ENCODE measurements at regions of chr3 and their contacts with region 1.

Region 1: DNA sequence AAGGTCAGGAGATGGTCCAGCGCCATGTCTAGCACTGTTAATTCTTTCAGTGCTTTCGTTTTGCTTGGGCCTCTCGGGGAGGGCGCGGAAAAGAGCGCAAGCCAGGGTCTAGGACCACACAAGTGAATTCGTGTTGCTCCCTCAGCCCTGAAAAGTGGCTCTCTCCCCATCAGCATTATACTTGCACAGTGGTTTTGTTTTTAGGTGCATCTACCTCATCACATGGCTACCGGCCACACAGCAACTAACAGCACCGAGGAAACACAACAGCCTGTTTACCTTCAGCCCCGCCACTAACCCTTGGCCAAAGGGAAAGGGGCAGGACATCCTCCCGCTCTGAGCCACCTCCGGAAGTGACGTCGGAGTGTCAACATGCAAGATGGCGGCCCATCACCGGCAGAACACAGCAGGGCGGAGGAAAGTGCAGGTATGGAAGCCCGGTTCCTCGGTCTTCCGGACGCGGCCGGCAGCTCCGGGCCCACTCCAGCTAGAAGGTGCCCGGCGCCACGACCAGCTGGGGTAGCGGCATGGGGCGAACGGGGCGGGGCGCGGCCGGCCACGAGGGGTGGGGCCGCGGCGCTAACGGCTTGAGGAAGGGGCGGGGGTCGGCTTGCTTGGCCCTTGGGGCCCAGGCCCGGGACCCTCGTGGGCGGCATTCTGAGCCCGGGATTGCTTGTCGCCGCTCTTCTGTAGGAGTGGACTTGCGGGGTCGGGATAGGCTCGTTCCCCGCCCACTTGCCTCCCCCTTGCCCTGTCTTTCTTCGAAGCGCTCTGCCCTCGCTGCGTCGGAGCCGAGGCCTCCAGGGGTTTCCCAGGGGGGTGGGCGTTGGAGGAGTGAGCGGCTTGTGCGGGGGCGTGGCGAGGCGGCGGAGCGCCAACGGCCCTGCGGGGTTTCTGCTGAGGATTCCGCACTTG is at the starts of genes SCN11A and WDR48:
- DNase-seq: peak; percentile 82 to 97 (median 94)
- ATAC-seq: peak; percentile 88
- H3K4me3 ChIP-seq: peak within 1 kb of the TSS; percentile 59 to 70
- H3K4me3 Mint-ChIP-seq: peak within 1 kb of the TSS; percentile 98
- H3K27ac ChIP-seq: peak within 1 kb of the TSS; percentile 83 to 91
- H3K27ac Mint-ChIP-seq: peak within 1 kb of the TSS; percentile 98
- H3K4me1 ChIP-seq: peaks cover 16% of the 10 kb centered on the region
- H3K4me1 Mint-ChIP-seq: peaks cover 67% of the 10 kb centered on the region
- H3K27me3 ChIP-seq: no peaks in the 10 kb centered on the region
- H3K27me3 Mint-ChIP-seq: no peaks in the 10 kb centered on the region
- CTCF ChIP-seq: no peak
- total RNA-seq, gene SCN11A: 0.08 to 0.11 TPM
- total RNA-seq, gene WDR48: 102 to 103 TPM

Region 2: GRCh38 chr3:38136777-38137614 is 914.9 kb before region 1 on chr3 and contains the start of gene ACAA1:
- CTCF ChIA-PET with region 1: no interaction called
- POLR2A ChIA-PET with region 1: no interaction called
- intact Hi-C with region 1: loop called (anchors 10 kb)
- DNase-seq: peak; percentile 93 to 99 (median 97)
- ATAC-seq: peak; percentile 86
- H3K4me3 ChIP-seq: peak within 1 kb of the TSS; percentile 94 to 99
- H3K4me3 Mint-ChIP-seq: peak within 1 kb of the TSS; percentile 93
- H3K27ac ChIP-seq: peak within 1 kb of the TSS; percentile 74 to 88
- H3K27ac Mint-ChIP-seq: peak within 1 kb of the TSS; percentile 98
- H3K4me1 ChIP-seq: peaks cover 45% of the 10 kb centered on the region
- H3K4me1 Mint-ChIP-seq: peaks cover 70% of the 10 kb centered on the region
- H3K27me3 ChIP-seq: no peaks in the 10 kb centered on the region
- H3K27me3 Mint-ChIP-seq: no peaks in the 10 kb centered on the region
- CTCF ChIP-seq: no peak
- total RNA-seq, gene ACAA1: 49.4 to 49.9 TPM

Region 3: DNA sequence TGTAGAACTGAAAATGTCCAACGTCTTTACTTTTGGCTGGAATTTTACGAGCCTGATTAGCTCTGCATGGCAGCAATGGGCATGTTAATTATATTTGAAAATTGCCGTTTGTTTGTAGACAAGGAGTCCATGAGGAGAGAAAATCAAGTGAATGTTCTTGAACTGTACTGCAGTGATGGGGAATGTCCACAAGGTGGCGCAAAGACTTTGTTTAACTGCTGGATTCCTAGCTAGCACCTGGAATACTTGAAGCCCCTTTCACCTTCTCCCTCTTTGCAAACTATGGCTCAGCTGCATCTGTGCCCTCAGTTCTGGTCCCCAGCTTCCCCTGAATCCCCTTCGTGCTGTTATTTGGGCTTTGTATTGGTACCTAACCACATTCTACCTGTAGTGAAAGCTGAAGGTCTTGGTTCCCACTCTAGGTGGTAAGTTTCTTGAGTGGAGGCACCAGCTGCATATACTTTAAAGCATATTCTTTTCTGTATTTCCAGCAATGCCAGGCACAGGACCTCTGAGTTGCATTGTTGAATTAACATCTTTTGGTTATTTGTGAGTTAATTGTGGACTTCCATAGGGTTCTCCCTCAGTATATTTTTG is 530.4 kb before region 1 on chr3:
- CTCF ChIA-PET with region 1: no interaction called
- POLR2A ChIA-PET with region 1: no interaction called
- intact Hi-C with region 1: loop called in 1 of 2 experiments (anchors 5 kb)
- DNase-seq: peak; percentile 24 to 80 (median 65)
- ATAC-seq: peak; percentile 67
- H3K4me3 ChIP-seq: no peak overlapping the region
- H3K4me3 Mint-ChIP-seq: no peak overlapping the region
- H3K27ac ChIP-seq: no peak overlapping the region
- H3K27ac Mint-ChIP-seq: no peak overlapping the region
- H3K4me1 ChIP-seq: peaks cover 30% of the 10 kb centered on the region
- H3K4me1 Mint-ChIP-seq: peaks cover 34% of the 10 kb centered on the region
- H3K27me3 ChIP-seq: no peaks in the 10 kb centered on the region
- H3K27me3 Mint-ChIP-seq: no peaks in the 10 kb centered on the region
- CTCF ChIP-seq: peak; percentile 83

Region 4: DNA sequence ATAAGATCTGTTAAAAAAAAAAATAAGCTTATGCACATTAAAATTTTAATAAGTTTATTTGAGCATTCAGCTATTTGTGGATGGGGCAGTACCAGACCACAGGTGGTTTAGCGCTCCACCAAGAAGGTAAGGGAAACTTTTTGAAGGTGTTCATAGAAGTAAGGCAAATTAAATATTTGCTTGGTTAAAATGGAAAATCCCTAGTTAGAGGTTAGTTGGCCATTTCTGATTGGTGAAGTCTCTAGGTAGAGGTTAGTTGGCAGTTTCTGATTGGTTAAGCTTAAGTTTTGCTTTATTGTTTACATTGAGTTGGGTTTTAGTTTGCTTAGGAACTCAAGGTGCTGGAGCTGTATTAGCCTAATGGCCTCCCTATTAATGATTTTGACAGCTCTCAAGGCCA is 30.9 kb before region 1 on chr3:
- CTCF ChIA-PET with region 1: no interaction called
- POLR2A ChIA-PET with region 1: no interaction called
- intact Hi-C with region 1: no loop called
- DNase-seq: peak in 1 of 9 experiments; percentile 12
- ATAC-seq: no peak
- H3K4me3 ChIP-seq: no peak overlapping the region
- H3K4me3 Mint-ChIP-seq: no peak overlapping the region
- H3K27ac ChIP-seq: no peak overlapping the region
- H3K27ac Mint-ChIP-seq: no peak overlapping the region
- H3K4me1 ChIP-seq: no peaks in the 10 kb centered on the region
- H3K4me1 Mint-ChIP-seq: no peaks in the 10 kb centered on the region
- H3K27me3 ChIP-seq: no peaks in the 10 kb centered on the region
- H3K27me3 Mint-ChIP-seq: peaks cover 17% of the 10 kb centered on the region
- CTCF ChIP-seq: no peak

Region 5: GRCh38 chr3:39180546-39181346 is 128.8 kb after region 1 on chr3:
- CTCF ChIA-PET with region 1: no interaction called
- POLR2A ChIA-PET with region 1: no interaction called
- intact Hi-C with region 1: loop called (anchors 2 kb)
- DNase-seq: peak; percentile 79 to 96 (median 88)
- ATAC-seq: peak; percentile 89
- H3K4me3 ChIP-seq: peak overlapping the region; percentile 39 to 44
- H3K4me3 Mint-ChIP-seq: peak overlapping the region; percentile 76
- H3K27ac ChIP-seq: peak overlapping the region; percentile 39 to 62
- H3K27ac Mint-ChIP-seq: peak overlapping the region; percentile 85
- H3K4me1 ChIP-seq: peaks cover 27% of the 10 kb centered on the region
- H3K4me1 Mint-ChIP-seq: peaks cover 37% of the 10 kb centered on the region
- H3K27me3 ChIP-seq: no peaks in the 10 kb centered on the region
- H3K27me3 Mint-ChIP-seq: no peaks in the 10 kb centered on the region
- CTCF ChIP-seq: no peak

Region 6: DNA sequence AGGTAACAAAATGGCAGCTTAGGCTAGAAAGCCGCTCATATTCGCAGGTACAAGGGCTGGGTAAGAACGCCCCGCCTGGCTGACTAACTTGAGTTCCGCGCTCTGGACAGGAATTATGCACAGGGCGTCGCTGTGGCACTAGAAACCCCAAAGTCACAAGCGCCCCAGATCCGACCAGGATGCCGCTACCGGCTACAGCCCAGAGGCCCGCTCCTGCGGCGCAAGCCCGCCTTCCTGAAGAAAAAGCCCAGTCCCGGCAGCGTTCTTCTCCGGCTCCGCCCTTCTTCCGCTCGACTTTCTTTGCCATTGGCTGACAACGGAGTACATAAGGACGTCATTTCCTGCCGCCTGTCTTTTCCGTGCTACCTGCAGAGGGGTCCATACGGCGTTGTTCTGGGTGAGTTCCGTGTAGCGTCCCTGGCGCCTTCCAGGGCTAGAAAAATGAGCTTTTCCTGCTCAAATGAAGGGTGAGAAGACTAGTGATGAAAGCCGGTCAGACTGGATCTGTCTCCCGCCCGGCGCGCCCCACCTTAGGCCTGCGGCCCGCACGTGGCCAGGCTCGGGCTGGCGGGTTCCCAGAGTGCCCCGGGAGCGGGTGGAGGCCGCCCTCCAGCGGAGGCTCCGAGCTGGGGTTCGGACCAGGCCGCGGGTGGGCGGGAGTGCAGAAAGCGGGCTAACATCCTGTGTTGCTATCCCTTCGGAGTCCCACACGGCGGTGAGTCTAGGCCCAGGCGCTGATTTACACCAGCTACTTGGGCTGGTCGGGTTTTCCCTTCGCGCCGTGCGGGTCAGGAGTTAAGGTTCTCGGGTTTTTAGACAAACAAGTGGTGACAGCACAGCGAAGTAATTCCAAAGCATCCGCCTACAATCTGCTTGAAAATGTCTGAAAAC is 354.7 kb after region 1 on chr3 and contains the start of gene RPSA:
- CTCF ChIA-PET with region 1: no interaction called
- POLR2A ChIA-PET with region 1: interaction called, 3 read pairs
- intact Hi-C with region 1: loop called (anchors 1 to 5 kb)
- DNase-seq: peak; percentile 88 to 99 (median 94)
- ATAC-seq: peak; percentile 90
- H3K4me3 ChIP-seq: peak within 1 kb of the TSS; percentile 67 to 75
- H3K4me3 Mint-ChIP-seq: peak within 1 kb of the TSS; percentile 89
- H3K27ac ChIP-seq: peak within 1 kb of the TSS; percentile 83 to 90
- H3K27ac Mint-ChIP-seq: peak within 1 kb of the TSS; percentile 96
- H3K4me1 ChIP-seq: peaks cover 40% of the 10 kb centered on the region
- H3K4me1 Mint-ChIP-seq: peaks cover 48% of the 10 kb centered on the region
- H3K27me3 ChIP-seq: no peaks in the 10 kb centered on the region
- H3K27me3 Mint-ChIP-seq: no peaks in the 10 kb centered on the region
- CTCF ChIP-seq: peak; percentile 45
- total RNA-seq, gene RPSA: 1,951 to 2,020 TPM

Measured in CD8-positive, alpha-beta T cell (primary cell).